Body of pancreas (tissue), 4 donors: ENCODE measurements at regions of chr10 and their contacts with region 1.

Region 1: DNA sequence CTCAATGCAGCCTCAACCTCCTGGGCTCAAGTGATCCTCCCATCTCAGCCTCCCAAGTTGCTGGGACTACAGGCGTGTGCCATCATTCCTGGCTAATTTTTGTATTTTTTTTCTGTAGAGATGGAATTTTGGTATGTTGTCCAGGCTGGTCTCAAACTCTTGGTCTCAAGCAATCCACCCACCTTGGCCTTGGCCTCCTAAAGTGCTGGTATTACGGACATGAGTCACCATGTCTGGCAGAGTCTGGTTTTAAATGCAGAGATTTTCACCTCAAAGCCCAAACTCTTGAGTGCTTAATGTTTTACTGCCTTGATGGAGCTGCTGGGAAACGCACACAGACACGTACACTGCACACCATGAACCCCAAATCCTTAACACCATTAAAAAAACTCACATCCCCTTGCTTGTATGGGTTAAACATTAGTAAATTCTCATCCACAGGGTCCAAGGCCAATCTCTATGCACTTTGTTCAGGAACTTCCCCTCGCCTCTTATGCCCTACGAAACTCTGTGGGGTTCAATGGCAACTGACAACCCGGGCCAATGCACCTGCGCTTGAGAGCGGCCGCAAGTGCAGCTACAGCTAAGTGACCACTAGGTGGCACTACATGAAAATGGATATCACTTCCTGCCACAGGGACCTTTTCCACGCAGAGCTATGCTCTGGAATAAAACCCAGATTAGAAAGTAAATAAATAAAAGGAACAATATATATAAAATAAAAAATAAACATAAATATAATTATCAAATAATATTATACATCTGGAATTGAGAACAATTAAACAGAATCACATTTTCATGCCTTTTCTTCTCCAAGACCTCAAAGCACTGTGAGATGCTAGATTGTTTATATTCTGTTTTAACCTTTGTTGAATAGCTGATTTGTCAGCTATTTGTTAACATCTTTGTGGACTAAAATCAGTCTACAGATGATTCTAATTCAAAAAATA is 66.9 kb upstream of the AFAP1L2 start:
- DNase-seq: peak; percentile 72 to 75 (median 72)
- ATAC-seq: peak; percentile 85
- H3K4me3 ChIP-seq: no peak overlapping the region
- H3K27ac ChIP-seq: peak overlapping the region in 1 of 4 donors; percentile 30
- H3K4me1 ChIP-seq: peaks cover 19% of the 10 kb centered on the region
- H3K27me3 ChIP-seq: no peaks in the 10 kb centered on the region
- CTCF ChIP-seq: peak; percentile 69 to 99 (median 86)
- POLR2A ChIP-seq: no peak

Region 2: DNA sequence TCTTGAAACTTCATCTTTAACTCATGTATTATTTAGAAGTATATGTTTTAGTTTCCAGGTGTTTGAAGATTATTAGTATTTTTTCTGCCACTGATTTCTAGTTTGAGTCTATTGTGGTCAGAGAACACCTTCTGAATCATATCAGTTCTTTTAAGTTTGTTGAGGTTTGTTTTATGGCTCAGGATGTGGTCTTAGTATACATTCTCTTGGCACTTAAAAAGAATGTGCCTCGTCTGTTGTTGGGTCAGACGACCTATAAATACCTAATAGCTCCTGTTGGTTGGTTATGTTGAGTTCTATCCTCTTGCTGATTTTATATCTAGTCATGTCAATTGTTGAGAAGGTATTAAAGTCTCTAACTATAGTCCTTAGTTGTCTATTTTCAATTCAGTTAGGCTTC is 276.2 kb before region 1 on chr10:
- intact Hi-C with region 1: no loop called
- DNase-seq: no peak
- ATAC-seq: no peak
- H3K4me3 ChIP-seq: no peak overlapping the region
- H3K27ac ChIP-seq: no peak overlapping the region
- H3K4me1 ChIP-seq: no peaks in the 10 kb centered on the region
- H3K27me3 ChIP-seq: no peaks in the 10 kb centered on the region
- CTCF ChIP-seq: no peak
- POLR2A ChIP-seq: no peak

Region 3: GRCh38 chr10:114320249-114321116 is 150.7 kb before region 1 on chr10:
- intact Hi-C with region 1: no loop called
- DNase-seq: no peak
- ATAC-seq: no peak
- H3K4me3 ChIP-seq: no peak overlapping the region
- H3K27ac ChIP-seq: no peak overlapping the region
- H3K4me1 ChIP-seq: no peaks in the 10 kb centered on the region
- H3K27me3 ChIP-seq: no peaks in the 10 kb centered on the region
- CTCF ChIP-seq: no peak
- POLR2A ChIP-seq: no peak

Region 4: DNA sequence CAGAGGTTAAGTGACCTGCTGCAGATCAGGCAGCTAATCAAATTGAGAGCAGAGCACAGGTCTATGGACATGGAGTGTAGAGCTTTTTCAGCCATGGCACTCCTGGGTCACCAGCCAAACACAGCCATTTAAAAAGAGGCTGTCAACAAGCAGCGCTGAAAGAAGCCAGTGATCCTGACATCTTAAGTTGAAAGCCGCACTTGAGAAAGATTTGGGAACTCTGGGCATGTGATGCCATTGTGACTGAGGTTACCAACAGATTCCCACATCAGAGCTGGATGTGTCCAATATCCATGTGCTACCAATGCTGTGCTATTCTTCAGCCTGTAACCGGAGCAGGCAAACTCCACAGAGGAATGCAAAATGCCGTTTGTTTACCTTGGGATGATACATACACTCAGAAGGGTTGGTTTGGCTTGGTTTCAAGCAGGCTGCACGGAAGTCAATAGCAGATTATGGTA is 243.1 kb after region 1 on chr10:
- intact Hi-C with region 1: no loop called
- DNase-seq: no peak
- ATAC-seq: no peak
- H3K4me3 ChIP-seq: no peak overlapping the region
- H3K27ac ChIP-seq: no peak overlapping the region
- H3K4me1 ChIP-seq: peaks cover 20% of the 10 kb centered on the region
- H3K27me3 ChIP-seq: no peaks in the 10 kb centered on the region
- CTCF ChIP-seq: no peak
- POLR2A ChIP-seq: no peak

Region 5: DNA sequence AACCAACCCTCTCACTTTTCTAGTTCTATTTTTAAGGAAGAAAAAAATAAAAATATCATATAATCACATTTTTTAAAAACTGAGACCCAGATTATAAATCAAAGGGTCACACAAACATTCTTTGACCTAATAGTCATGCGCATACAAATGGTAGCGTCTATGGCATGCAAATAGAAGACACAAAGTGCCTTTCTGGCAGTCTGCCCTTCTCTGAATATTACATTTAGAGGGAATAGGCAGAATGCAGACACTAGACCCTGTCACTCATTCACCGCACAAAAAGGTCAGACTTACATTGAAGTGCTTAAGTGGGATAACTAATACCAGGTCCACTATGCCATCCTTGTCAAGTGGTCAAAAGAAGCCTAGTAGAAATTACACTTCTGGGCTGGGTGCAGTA is 323.8 kb after region 1 on chr10:
- intact Hi-C with region 1: loop called (anchors 10 kb)
- DNase-seq: no peak
- ATAC-seq: no peak
- H3K4me3 ChIP-seq: no peak overlapping the region
- H3K27ac ChIP-seq: no peak overlapping the region
- H3K4me1 ChIP-seq: no peaks in the 10 kb centered on the region
- H3K27me3 ChIP-seq: no peaks in the 10 kb centered on the region
- CTCF ChIP-seq: no peak
- POLR2A ChIP-seq: no peak